ENCODE measurements at regions of chr9 and their contacts with region 1.

Region 1: GRCh38 chr9:98056269-98057137 is at the start of gene NANS:
- DNase-seq: peak; percentile 78 to 92 (median 88)
- ATAC-seq: peak; percentile 94 to 98 (median 96)
- H3K4me3 ChIP-seq: peak within 1 kb of the TSS; percentile 83 to 85
- H3K4me3 Mint-ChIP-seq: peak within 1 kb of the TSS; percentile 94 to 98 (median 94)
- H3K27ac ChIP-seq: peak within 1 kb of the TSS; percentile 83
- H3K27ac Mint-ChIP-seq: peak within 1 kb of the TSS; percentile 91 to 95
- H3K4me1 ChIP-seq: peaks cover 3 to 21% of the 10 kb centered on the region in 2 experiments
- H3K4me1 Mint-ChIP-seq: peaks cover 18 to 33% (median 29%) of the 10 kb centered on the region in 3 donors
- H3K27me3 ChIP-seq: no peaks in the 10 kb centered on the region
- H3K27me3 Mint-ChIP-seq: no peaks in the 10 kb centered on the region
- total RNA-seq, gene NANS: 21.7 to 57.5 (median 27.6) TPM

Region 2: GRCh38 chr9:97982683-97983588 is 73.6 kb before region 1 on chr9 and contains the start of gene ANP32B:
- CTCF ChIA-PET with region 1: interaction called, 5 to 16 read pairs
- POLR2A ChIA-PET with region 1: interaction called in 1 of 2 experiments, 3 read pairs
- DNase-seq: peak; percentile 88 to 96 (median 92)
- ATAC-seq: peak; percentile 79 to 87 (median 82)
- H3K4me3 ChIP-seq: peak within 1 kb of the TSS; percentile 79 to 82
- H3K4me3 Mint-ChIP-seq: peak within 1 kb of the TSS; percentile 80 to 81 (median 80)
- H3K27ac ChIP-seq: peak within 1 kb of the TSS; percentile 93
- H3K27ac Mint-ChIP-seq: peak within 1 kb of the TSS; percentile 84 to 88
- H3K4me1 ChIP-seq: peaks cover 30 to 61% of the 10 kb centered on the region in 2 experiments
- H3K4me1 Mint-ChIP-seq: peaks cover 55 to 56% (median 56%) of the 10 kb centered on the region in 3 donors
- H3K27me3 ChIP-seq: peaks cover 0 to 4% of the 10 kb centered on the region in 2 experiments
- H3K27me3 Mint-ChIP-seq: no peaks in the 10 kb centered on the region
- total RNA-seq, gene ANP32B: 151 to 201 (median 172) TPM

Region 3: GRCh38 chr9:98034593-98035546 is 21.6 kb before region 1 on chr9:
- CTCF ChIA-PET with region 1: interaction called, 3 read pairs
- POLR2A ChIA-PET with region 1: interaction called, 4 to 14 read pairs
- DNase-seq: peak; percentile 64 to 96 (median 87)
- ATAC-seq: peak; percentile 94 to 99 (median 99)
- H3K4me3 ChIP-seq: no peak overlapping the region
- H3K4me3 Mint-ChIP-seq: no peak overlapping the region
- H3K27ac ChIP-seq: no peak overlapping the region
- H3K27ac Mint-ChIP-seq: no peak overlapping the region
- H3K4me1 ChIP-seq: peaks cover 0 to 6% of the 10 kb centered on the region in 2 experiments
- H3K4me1 Mint-ChIP-seq: peaks cover 7% of the 10 kb centered on the region in 3 donors
- H3K27me3 ChIP-seq: peaks cover 0 to 14% of the 10 kb centered on the region in 2 experiments
- H3K27me3 Mint-ChIP-seq: peaks cover 3% of the 10 kb centered on the region in 2 donors

Region 4: GRCh38 chr9:98045234-98046179 is 11.0 kb before region 1 on chr9:
- CTCF ChIA-PET with region 1: interaction called, 9 to 11 read pairs
- POLR2A ChIA-PET with region 1: interaction called, 12 to 23 read pairs
- DNase-seq: peak in 29 of 35 experiments; percentile 6 to 80 (median 30)
- ATAC-seq: peak; percentile 95 to 98 (median 97)
- H3K4me3 ChIP-seq: peak overlapping the region; percentile 44 to 66
- H3K4me3 Mint-ChIP-seq: peak overlapping the region; percentile 75 to 81 (median 80)
- H3K27ac ChIP-seq: peak overlapping the region; percentile 50
- H3K27ac Mint-ChIP-seq: peak overlapping the region; percentile 76 to 92
- H3K4me1 ChIP-seq: peaks cover 0 to 11% of the 10 kb centered on the region in 2 experiments
- H3K4me1 Mint-ChIP-seq: peaks cover 31 to 37% (median 33%) of the 10 kb centered on the region in 3 donors
- H3K27me3 ChIP-seq: no peaks in the 10 kb centered on the region
- H3K27me3 Mint-ChIP-seq: peaks cover 0 to under 1% of the 10 kb centered on the region in 2 donors

Measured in T-cell (primary cell).